CD8-positive, alpha-beta T cell (primary cell): ENCODE measurements at regions of chr1 and their contacts with region 1.

Region 1: GRCh38 chr1:10472220-10473144 is at the start of gene DFFA:
- DNase-seq: peak; percentile 83 to 96 (median 91)
- ATAC-seq: peak; percentile 75
- H3K4me3 ChIP-seq: peak within 1 kb of the TSS; percentile 62 to 81
- H3K4me3 Mint-ChIP-seq: peak within 1 kb of the TSS; percentile 92
- H3K27ac ChIP-seq: peak within 1 kb of the TSS; percentile 39 to 66
- H3K27ac Mint-ChIP-seq: peak within 1 kb of the TSS; percentile 90
- H3K4me1 ChIP-seq: peaks cover 34% of the 10 kb centered on the region
- H3K4me1 Mint-ChIP-seq: peaks cover 47% of the 10 kb centered on the region
- H3K27me3 ChIP-seq: no peaks in the 10 kb centered on the region
- H3K27me3 Mint-ChIP-seq: no peaks in the 10 kb centered on the region
- CTCF ChIP-seq: no peak
- total RNA-seq, gene DFFA: 10.0 to 10.4 TPM

Region 2: GRCh38 chr1:10398734-10399623 is 73.5 kb before region 1 on chr1 and contains the start of gene PGD:
- CTCF ChIA-PET with region 1: no interaction called
- POLR2A ChIA-PET with region 1: no interaction called
- intact Hi-C with region 1: loop called (anchors 1 kb)
- DNase-seq: peak; percentile 91 to 98 (median 97)
- ATAC-seq: peak; percentile 97
- H3K4me3 ChIP-seq: peak within 1 kb of the TSS; percentile 86 to 97
- H3K4me3 Mint-ChIP-seq: peak within 1 kb of the TSS; percentile 97
- H3K27ac ChIP-seq: peak within 1 kb of the TSS; percentile 57 to 67
- H3K27ac Mint-ChIP-seq: peak within 1 kb of the TSS; percentile 77
- H3K4me1 ChIP-seq: peaks cover 16% of the 10 kb centered on the region
- H3K4me1 Mint-ChIP-seq: peaks cover 22% of the 10 kb centered on the region
- H3K27me3 ChIP-seq: no peaks in the 10 kb centered on the region
- H3K27me3 Mint-ChIP-seq: no peaks in the 10 kb centered on the region
- CTCF ChIP-seq: no peak
- total RNA-seq, gene PGD: 20.2 to 21.7 TPM

Region 3: GRCh38 chr1:10888286-10888685 is 415.8 kb after region 1 on chr1:
- CTCF ChIA-PET with region 1: no interaction called
- POLR2A ChIA-PET with region 1: no interaction called
- intact Hi-C with region 1: no loop called
- DNase-seq: no peak
- ATAC-seq: no peak
- H3K4me3 ChIP-seq: no peak overlapping the region
- H3K4me3 Mint-ChIP-seq: peak overlapping the region; percentile 3
- H3K27ac ChIP-seq: no peak overlapping the region
- H3K27ac Mint-ChIP-seq: no peak overlapping the region
- H3K4me1 ChIP-seq: no peaks in the 10 kb centered on the region
- H3K4me1 Mint-ChIP-seq: peaks cover 8% of the 10 kb centered on the region
- H3K27me3 ChIP-seq: peaks cover 5 to 13% of the 10 kb centered on the region in 2 experiments
- H3K27me3 Mint-ChIP-seq: peaks cover 44% of the 10 kb centered on the region
- CTCF ChIP-seq: no peak

Region 4: GRCh38 chr1:11012250-11013171 is 540.0 kb after region 1 on chr1 and contains the start of gene TARDBP:
- CTCF ChIA-PET with region 1: no interaction called
- POLR2A ChIA-PET with region 1: no interaction called
- intact Hi-C with region 1: loop called in 1 of 2 experiments (anchors 2 kb)
- DNase-seq: peak; percentile 82 to 95 (median 90)
- ATAC-seq: peak; percentile 87
- H3K4me3 ChIP-seq: peak within 1 kb of the TSS; percentile 78 to 94
- H3K4me3 Mint-ChIP-seq: peak within 1 kb of the TSS; percentile 92
- H3K27ac ChIP-seq: peak within 1 kb of the TSS; percentile 95 to 97
- H3K27ac Mint-ChIP-seq: peak within 1 kb of the TSS; percentile 97
- H3K4me1 ChIP-seq: peaks cover 38% of the 10 kb centered on the region
- H3K4me1 Mint-ChIP-seq: peaks cover 36% of the 10 kb centered on the region
- H3K27me3 ChIP-seq: no peaks in the 10 kb centered on the region
- H3K27me3 Mint-ChIP-seq: no peaks in the 10 kb centered on the region
- CTCF ChIP-seq: no peak
- total RNA-seq, gene TARDBP: 125 to 131 TPM

Region 5: DNA sequence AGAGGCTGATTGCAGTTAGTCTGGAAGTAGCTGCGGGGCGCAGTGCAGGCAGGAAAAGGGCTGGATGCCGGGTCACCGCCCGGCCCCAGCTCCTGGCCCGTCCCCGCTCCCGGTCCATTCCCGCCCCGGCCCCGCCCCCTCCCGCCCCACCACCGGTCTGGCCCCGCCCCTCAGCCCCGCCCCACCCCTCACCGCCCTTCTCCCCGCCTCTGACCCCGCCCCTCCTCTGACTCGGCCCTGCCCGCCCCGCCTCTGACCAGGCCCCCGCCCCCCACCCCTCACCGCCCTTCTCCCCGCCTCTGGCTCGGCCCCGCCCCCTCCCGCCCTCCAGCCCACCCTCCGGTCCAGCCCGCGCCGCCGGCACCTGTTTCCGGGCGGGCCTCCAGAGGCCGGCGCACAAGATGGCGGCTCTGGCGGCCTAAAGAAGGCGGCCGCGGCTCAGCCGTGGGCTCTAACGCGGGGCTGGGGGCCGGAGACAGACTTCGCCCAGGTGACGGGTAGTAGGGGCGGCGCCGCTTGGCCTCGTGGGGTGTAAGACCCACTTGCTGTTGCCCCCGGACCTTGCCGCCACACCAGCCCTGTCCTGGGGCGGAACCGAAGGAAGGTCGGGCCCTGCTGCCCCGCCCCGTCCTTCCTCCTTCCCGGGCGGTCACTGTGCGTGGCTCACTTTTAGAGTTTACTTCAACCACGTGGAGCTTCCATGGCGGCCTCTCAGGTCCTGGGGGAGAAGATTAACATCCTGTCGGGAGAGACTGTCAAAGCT is 800.5 kb after region 1 on chr1 and contains the start of gene UBIAD1:
- CTCF ChIA-PET with region 1: no interaction called
- POLR2A ChIA-PET with region 1: no interaction called
- intact Hi-C with region 1: loop called in 1 of 2 experiments (anchors 5 kb)
- DNase-seq: peak; percentile 66 to 92 (median 84)
- ATAC-seq: peak; percentile 78
- H3K4me3 ChIP-seq: peak within 1 kb of the TSS; percentile 69 to 100
- H3K4me3 Mint-ChIP-seq: peak within 1 kb of the TSS; percentile 89
- H3K27ac ChIP-seq: peak within 1 kb of the TSS; percentile 74 to 95
- H3K27ac Mint-ChIP-seq: peak within 1 kb of the TSS; percentile 94
- H3K4me1 ChIP-seq: peaks cover 30% of the 10 kb centered on the region
- H3K4me1 Mint-ChIP-seq: peaks cover 34% of the 10 kb centered on the region
- H3K27me3 ChIP-seq: no peaks in the 10 kb centered on the region
- H3K27me3 Mint-ChIP-seq: no peaks in the 10 kb centered on the region
- CTCF ChIP-seq: no peak
- total RNA-seq, gene UBIAD1: 15.9 to 18.2 TPM